CD8-positive, alpha-beta memory T cell (primary cell): ENCODE measurements at regions of chr2 and their contacts with region 1.

Region 1: GRCh38 chr2:237572021-237572741 is 5.8 kb downstream of the PRLH start:
- DNase-seq: peak; percentile 68 to 82 (median 77)
- H3K4me3 ChIP-seq: no peak overlapping the region
- H3K4me3 Mint-ChIP-seq: no peak overlapping the region
- H3K27ac ChIP-seq: no peak overlapping the region
- H3K27ac Mint-ChIP-seq: peak overlapping the region in 1 of 8 donors; percentile 17
- H3K4me1 ChIP-seq: peaks cover 6% of the 10 kb centered on the region
- H3K4me1 Mint-ChIP-seq: peaks cover 0 to 5% (median 5%) of the 10 kb centered on the region in 3 donors
- H3K27me3 ChIP-seq: no peaks in the 10 kb centered on the region
- H3K27me3 Mint-ChIP-seq: peaks cover 14 to 25% of the 10 kb centered on the region in 2 donors

Region 2: GRCh38 chr2:237561221-237561620 is 11.0 kb before region 1 on chr2:
- CTCF ChIA-PET with region 1: interaction called, 10 read pairs
- POLR2A ChIA-PET with region 1: no interaction called
- DNase-seq: no peak
- H3K4me3 ChIP-seq: no peak overlapping the region
- H3K4me3 Mint-ChIP-seq: no peak overlapping the region
- H3K27ac ChIP-seq: no peak overlapping the region
- H3K27ac Mint-ChIP-seq: no peak overlapping the region
- H3K4me1 ChIP-seq: no peaks in the 10 kb centered on the region
- H3K4me1 Mint-ChIP-seq: peaks cover 6 to 10% (median 8%) of the 10 kb centered on the region in 3 donors
- H3K27me3 ChIP-seq: no peaks in the 10 kb centered on the region
- H3K27me3 Mint-ChIP-seq: peaks cover 10 to 38% of the 10 kb centered on the region in 2 donors